AG04449 (cell line): ENCODE measurements at regions of chr7 and their contacts with region 1.

Region 1: GRCh38 chr7:100407285-100408180 is 21.0 kb downstream of the ZCWPW1 start:
- DNase-seq: no peak
- H3K4me3 ChIP-seq: no peak overlapping the region
- CTCF ChIP-seq: peak; percentile 59

Region 2: DNA sequence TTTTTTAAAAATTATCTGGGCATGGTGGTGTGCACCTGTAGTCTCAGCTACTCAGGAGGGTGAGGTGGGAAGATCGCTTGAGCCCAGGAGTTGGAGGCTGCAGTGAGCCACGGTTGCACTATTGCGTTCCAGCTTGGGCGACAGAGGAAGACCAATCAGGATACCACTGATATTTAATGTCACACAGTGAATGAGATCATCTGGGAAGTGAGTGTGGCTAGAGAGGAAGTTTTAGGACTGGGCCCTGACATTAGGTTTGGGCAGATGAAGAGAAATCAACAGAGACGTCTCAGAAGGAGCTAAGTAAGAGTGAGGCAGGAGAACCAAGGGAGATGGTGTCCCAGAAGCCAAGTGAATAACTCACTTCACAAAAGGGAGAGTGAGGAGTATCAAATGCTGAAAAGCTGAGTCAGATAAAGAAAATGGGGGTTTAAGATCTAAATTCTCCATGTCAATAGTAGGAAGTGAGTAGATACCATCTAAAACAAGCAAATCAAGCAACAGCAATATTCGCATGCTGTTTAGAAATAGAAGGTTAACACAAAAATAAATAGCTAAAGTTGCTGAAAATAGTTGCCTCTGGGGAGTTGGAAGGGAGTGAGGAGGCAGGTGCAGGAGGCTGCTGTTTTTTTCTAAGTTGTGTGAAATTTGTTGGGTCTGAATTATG is 22.8 kb before region 1 on chr7:
- CTCF ChIA-PET with region 1: interaction called, 13 read pairs
- POLR2A ChIA-PET with region 1: no interaction called
- DNase-seq: no peak
- H3K4me3 ChIP-seq: no peak overlapping the region
- CTCF ChIP-seq: no peak

Region 3: DNA sequence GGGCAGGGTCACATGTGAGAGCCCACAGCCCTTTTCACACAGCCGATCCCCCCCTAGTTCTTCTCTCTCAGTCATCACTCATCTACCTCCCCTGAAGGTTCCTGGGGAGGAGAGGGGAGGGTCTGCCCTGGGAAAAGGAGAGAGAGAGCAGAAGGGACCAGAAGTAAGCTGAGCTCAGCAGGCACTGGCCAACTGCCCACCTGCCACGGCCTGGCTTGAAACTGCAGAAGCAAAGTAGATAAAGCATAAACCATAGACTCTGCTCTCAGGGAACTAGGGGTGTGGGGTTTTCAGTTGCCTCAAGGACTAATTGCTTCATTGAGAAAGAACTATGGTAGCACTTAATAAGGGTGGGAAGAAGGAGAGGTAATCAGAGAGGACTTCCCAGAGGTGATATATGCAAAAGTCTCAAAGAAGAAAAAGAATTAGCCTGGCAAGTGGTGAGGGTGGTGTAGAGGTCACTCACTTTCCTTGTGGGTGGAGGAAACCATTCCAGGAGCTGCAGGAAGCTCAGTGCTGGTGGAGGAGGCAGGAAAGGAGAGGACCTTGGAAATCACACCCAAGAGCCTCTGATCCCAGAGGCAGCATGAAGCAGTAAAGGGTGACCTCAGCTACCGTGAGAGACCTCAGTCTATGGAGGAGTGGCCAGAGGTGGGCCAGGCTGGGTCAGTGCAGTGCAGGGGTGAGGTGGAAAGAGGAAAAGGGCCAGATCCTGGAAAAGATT is 17.1 kb before region 1 on chr7:
- CTCF ChIA-PET with region 1: interaction called, 28 read pairs
- POLR2A ChIA-PET with region 1: no interaction called
- DNase-seq: no peak
- H3K4me3 ChIP-seq: no peak overlapping the region
- CTCF ChIP-seq: no peak

Region 4: GRCh38 chr7:100396421-100396982 is 11.0 kb before region 1 on chr7:
- CTCF ChIA-PET with region 1: interaction called, 28 read pairs
- POLR2A ChIA-PET with region 1: no interaction called
- DNase-seq: no peak
- H3K4me3 ChIP-seq: no peak overlapping the region
- CTCF ChIP-seq: no peak

Region 5: DNA sequence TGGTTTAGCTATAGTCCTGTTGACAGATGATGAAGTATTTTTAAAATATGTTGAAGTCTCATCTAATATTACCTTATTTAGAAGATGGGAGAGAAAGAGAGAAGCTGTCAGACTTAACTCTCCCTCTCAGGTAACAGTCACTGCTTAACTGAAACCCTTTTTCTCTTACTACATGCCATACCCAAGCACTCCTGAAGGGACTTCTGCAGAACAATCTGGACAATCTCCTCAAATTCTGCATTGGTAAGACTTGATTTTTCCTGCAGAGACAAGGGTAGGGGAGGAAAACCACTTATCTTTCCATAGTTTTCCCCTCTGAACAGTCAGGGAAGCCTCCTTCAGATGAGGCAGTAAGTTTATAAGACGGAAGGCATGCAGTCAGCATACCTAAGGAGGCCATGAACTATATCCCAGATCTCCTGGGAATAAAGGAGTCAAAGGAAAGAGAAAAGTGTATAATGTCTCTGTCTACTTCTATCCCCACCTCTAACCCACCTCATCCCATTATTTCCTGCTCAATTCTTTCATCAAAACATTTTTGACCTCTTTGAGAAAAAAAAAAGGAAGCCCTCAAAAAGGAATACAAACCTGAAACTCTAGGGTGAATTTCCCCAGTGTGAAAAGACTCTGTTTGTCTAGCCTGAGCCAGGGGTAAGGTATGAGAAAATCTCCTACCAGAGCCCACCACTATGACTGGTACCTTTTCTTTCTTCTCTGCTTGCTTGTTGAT is 11.6 kb after region 1 on chr7:
- CTCF ChIA-PET with region 1: interaction called, 30 read pairs
- POLR2A ChIA-PET with region 1: no interaction called
- DNase-seq: no peak
- H3K4me3 ChIP-seq: no peak overlapping the region
- CTCF ChIP-seq: no peak

Region 6: GRCh38 chr7:100428199-100428966 is 20.9 kb after region 1 on chr7 and contains the start of gene ZCWPW1:
- CTCF ChIA-PET with region 1: interaction called, 12 read pairs
- POLR2A ChIA-PET with region 1: no interaction called
- DNase-seq: peak; percentile 81
- H3K4me3 ChIP-seq: peak within 1 kb of the TSS; percentile 92
- CTCF ChIP-seq: no peak